BJ (cell line): ENCODE measurements at regions of chr2 and their contacts with region 1.

Region 1: GRCh38 chr2:134446383-134447017 is 192.6 kb downstream of the MGAT5 start:
- DNase-seq: no peak
- H3K4me3 ChIP-seq: no peak overlapping the region
- H3K27me3 ChIP-seq: no peaks in the 10 kb centered on the region
- CTCF ChIP-seq: no peak

Region 2: DNA sequence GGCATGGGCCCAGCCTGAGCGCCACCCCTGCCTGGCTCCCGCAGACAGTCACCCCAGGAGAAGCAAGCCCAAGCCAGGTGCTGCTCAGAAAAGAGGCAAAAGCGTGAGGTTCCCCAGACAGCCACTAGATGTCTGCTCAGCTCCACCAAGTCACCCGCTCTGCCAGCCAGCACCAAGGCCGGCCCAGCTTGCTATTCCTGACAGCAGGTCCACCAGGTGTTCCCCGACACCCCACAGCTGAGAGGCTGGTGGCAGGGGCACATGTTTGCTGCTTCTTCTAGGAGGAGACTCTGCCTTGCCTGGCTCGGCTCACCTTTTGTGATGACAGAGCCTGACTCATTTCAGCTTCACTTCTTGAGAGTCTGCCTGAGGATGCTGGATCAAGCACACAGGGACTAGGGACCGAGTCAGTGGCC is 14.1 kb after region 1 on chr2:
- CTCF ChIA-PET with region 1: interaction called, 32 read pairs
- POLR2A ChIA-PET with region 1: no interaction called
- DNase-seq: no peak
- H3K4me3 ChIP-seq: no peak overlapping the region
- H3K27me3 ChIP-seq: peaks cover 2% of the 10 kb centered on the region
- CTCF ChIP-seq: peak; percentile 68

Region 3: GRCh38 chr2:134623796-134624195 is 177.3 kb after region 1 on chr2:
- CTCF ChIA-PET with region 1: no interaction called
- POLR2A ChIA-PET with region 1: no interaction called
- DNase-seq: no peak
- H3K4me3 ChIP-seq: no peak overlapping the region
- H3K27me3 ChIP-seq: no peaks in the 10 kb centered on the region
- CTCF ChIP-seq: no peak

Region 4: GRCh38 chr2:134640494-134640893 is 194.0 kb after region 1 on chr2:
- CTCF ChIA-PET with region 1: no interaction called
- POLR2A ChIA-PET with region 1: no interaction called
- DNase-seq: no peak
- H3K4me3 ChIP-seq: no peak overlapping the region
- H3K27me3 ChIP-seq: no peaks in the 10 kb centered on the region
- CTCF ChIP-seq: no peak